Cardiac septum (tissue), 1 donor: ENCODE measurements at regions of chr18 and their contacts with region 1.

Region 1: DNA sequence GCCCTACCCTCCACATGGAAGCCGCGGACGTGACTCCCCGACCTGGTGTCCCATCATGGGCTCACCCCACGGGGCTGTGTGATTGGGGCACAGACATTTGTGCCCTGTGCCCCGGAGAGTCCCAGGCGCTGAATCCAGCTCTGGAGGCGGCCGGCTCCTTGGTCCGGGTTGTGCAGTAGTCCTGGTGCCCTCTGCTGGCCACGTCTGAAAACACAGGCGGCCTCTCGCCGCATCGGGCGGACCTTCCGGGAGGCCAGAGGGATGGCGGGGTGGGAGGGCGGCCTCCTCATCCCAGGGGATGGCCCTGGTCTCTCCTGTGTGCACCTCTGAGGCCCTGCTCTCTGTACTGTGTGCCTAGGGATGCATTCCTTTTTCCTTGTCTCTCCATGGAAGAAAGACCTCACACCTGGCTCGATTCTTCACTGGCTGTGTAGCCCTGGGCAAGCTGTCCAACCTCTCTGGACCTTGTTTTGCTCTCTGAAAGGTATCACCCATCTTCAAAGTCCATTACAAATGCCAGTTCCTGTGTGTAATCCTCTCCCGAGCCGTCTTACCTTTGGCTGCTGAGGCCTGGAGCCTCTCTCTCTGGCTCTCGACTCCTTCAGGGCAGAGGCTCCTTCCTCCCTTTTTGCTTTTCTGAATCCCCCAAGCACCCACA is 27.6 kb downstream of the CELF4 start:
- DNase-seq: peak; percentile 87

Region 2: GRCh38 chr18:37341016-37341415 is 197.0 kb before region 1 on chr18:
- intact Hi-C with region 1: loop called (anchors 5 kb)
- DNase-seq: no peak

Region 3: GRCh38 chr18:37385846-37386778 is 151.9 kb before region 1 on chr18:
- intact Hi-C with region 1: loop called (anchors 1 kb)
- DNase-seq: no peak

Region 4: GRCh38 chr18:37445368-37445767 is 92.6 kb before region 1 on chr18:
- intact Hi-C with region 1: loop called (anchors 2 kb)
- DNase-seq: no peak